ENCODE measurements at regions of chr6 and their contacts with region 1.

Region 1: DNA sequence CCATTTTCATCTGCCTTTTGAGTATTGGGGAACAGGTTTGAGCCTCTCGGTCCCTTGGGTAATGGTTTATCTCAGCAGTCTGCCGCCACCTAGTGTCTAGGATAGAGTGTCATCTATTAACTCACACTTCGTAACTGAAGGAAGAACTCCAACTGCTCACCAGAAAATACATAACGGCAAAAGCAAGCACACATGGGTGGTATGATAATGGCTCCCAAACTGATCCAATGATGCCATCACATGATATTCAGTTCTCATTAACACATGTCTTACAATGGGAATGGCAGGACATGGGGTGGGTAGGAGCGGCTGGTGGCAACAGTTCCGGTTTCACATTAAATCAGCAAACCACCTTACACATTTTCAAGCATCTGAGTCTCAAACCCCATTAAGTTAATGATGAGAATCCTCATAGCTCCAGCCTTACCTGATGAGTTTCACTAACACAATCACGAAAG is 110.7 kb upstream of the PHACTR1 start:
- ATAC-seq: peak; percentile 60 to 91 (median 74)
- H3K4me3 ChIP-seq: no peak overlapping the region
- H3K27ac ChIP-seq: no peak overlapping the region
- H3K4me1 ChIP-seq: peaks cover 0 to 3% of the 10 kb centered on the region in 2 donors

Region 2: GRCh38 chr6:11618533-11618932 is 987.4 kb before region 1 on chr6:
- in situ Hi-C with region 1: loop called in 1 of 9 experiments (anchors 25 kb)
- ATAC-seq: peak in 2 of 8 experiments; percentile 25 to 63
- H3K4me3 ChIP-seq: no peak overlapping the region
- H3K27ac ChIP-seq: no peak overlapping the region
- H3K4me1 ChIP-seq: no peaks in the 10 kb centered on the region

Region 3: GRCh38 chr6:12289933-12290820 is 315.7 kb before region 1 on chr6 and contains the start of gene EDN1:
- in situ Hi-C with region 1: loop called in 1 of 9 experiments (anchors 10 kb)
- ATAC-seq: peak; percentile 95 to 99 (median 98)
- H3K4me3 ChIP-seq: peak within 1 kb of the TSS; percentile 22 to 37 (median 27)
- H3K27ac ChIP-seq: no peak within 1 kb of the TSS
- H3K4me1 ChIP-seq: peaks cover 0 to 7% of the 10 kb centered on the region in 2 donors
- total RNA-seq, gene EDN1: 0.22 to 5.8 (median 0.55) TPM in 7 of 8 experiments, not detected in the other

Region 4: GRCh38 chr6:12327391-12327790 is 278.5 kb before region 1 on chr6:
- in situ Hi-C with region 1: no loop called
- ATAC-seq: no peak
- H3K4me3 ChIP-seq: no peak overlapping the region
- H3K27ac ChIP-seq: no peak overlapping the region
- H3K4me1 ChIP-seq: no peaks in the 10 kb centered on the region

Region 5: GRCh38 chr6:12733876-12734275 is 128.0 kb after region 1 on chr6:
- in situ Hi-C with region 1: no loop called
- ATAC-seq: no peak
- H3K4me3 ChIP-seq: no peak overlapping the region
- H3K27ac ChIP-seq: no peak overlapping the region
- H3K4me1 ChIP-seq: peaks cover 0 to 3% of the 10 kb centered on the region in 2 donors

Measured in motor neuron (in vitro differentiated cells).